MCF 10A (cell line): ENCODE measurements at regions of chr3 and their contacts with region 1.

Region 1: DNA sequence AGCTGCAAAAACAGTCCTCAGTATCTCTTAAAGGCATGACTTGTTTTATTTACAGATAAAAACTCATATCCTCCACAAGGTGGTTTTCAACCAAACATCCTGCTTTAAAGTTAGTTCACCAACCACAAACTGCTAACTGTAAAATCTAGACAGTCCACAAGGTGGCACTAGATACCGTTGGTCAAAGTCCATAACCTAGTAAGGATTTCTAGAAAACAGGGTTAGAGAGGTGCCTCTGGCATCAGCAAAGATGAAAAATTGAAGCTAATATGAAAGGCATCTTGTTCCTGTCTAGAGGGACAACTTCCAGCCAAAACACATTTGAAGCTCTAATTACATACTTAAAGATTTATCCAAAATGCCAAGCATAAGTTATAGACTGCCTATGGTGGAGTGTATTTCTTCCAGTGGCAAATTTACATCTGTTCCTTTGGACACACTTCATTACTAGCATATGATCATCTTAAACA is 56.0 kb downstream of the ZMAT3 start:
- DNase-seq: peak; percentile 82
- H3K4me3 Mint-ChIP-seq: no peak overlapping the region
- H3K27ac Mint-ChIP-seq: peak overlapping the region; percentile 54
- H3K4me1 Mint-ChIP-seq: no peaks in the 10 kb centered on the region
- H3K27me3 Mint-ChIP-seq: no peaks in the 10 kb centered on the region
- CTCF ChIP-seq: peak; percentile 81

Region 2: DNA sequence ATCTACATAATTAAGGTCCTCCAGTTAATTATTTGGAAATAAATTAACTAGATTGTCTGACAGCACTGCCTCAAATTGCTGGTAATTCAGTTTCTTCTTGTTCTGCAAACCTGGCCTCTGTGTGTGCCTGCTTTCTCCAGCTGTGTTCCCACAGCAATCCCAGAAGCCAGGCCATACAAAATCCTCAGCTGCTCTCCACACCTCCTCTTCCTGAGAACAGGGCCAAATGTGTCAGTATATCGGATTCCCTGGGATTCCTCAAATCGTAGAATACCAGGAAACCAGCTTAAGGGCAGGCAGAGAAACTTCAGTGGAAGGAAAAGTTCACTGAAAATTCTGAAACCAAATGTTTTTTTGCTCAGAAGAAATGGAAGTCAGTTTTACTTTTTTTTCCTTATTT is 205.4 kb before region 1 on chr3:
- CTCF ChIA-PET with region 1: no interaction called
- POLR2A ChIA-PET with region 1: no interaction called
- intact Hi-C with region 1: no loop called
- DNase-seq: no peak
- H3K4me3 Mint-ChIP-seq: no peak overlapping the region
- H3K27ac Mint-ChIP-seq: no peak overlapping the region
- H3K4me1 Mint-ChIP-seq: no peaks in the 10 kb centered on the region
- H3K27me3 Mint-ChIP-seq: no peaks in the 10 kb centered on the region
- CTCF ChIP-seq: no peak

Region 3: GRCh38 chr3:178947738-178948137 is 67.8 kb before region 1 on chr3:
- CTCF ChIA-PET with region 1: no interaction called
- POLR2A ChIA-PET with region 1: no interaction called
- intact Hi-C with region 1: no loop called
- DNase-seq: no peak
- H3K4me3 Mint-ChIP-seq: no peak overlapping the region
- H3K27ac Mint-ChIP-seq: no peak overlapping the region
- H3K4me1 Mint-ChIP-seq: peaks cover 6% of the 10 kb centered on the region
- H3K27me3 Mint-ChIP-seq: no peaks in the 10 kb centered on the region
- CTCF ChIP-seq: peak; percentile 7

Region 4: DNA sequence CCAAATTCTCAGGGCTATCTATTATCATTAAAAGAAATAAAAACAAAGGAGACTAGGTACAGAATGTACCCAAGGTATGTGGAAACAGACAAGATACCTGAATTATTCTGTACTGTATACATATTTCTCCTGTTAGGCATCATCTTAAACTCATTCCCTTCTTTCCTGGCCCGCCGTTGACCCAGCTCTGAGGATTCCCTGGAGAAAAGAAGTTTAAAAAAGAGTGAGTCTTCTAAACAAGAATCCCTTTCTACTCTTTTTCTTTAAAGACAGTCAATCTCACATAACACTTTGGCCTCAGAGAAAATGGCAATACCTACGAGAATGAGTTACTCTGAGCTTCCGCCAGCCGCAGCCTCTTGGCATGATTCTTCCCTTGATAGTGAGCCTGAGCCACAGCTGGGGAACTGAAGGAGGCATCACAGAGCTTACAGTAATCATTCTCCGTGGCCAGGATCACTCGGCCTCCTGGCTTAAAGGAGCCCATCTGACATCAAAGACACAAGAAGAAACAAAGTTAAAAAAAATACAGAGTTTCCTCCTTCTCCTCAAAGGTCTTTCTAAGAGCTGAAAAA is 11.8 kb after region 1 on chr3:
- CTCF ChIA-PET with region 1: interaction called, 39 read pairs
- POLR2A ChIA-PET with region 1: interaction called, 11 read pairs
- intact Hi-C with region 1: no loop called
- DNase-seq: peak; percentile 71
- H3K4me3 Mint-ChIP-seq: peak overlapping the region; percentile 48
- H3K27ac Mint-ChIP-seq: peak overlapping the region; percentile 89
- H3K4me1 Mint-ChIP-seq: peaks cover 16% of the 10 kb centered on the region
- H3K27me3 Mint-ChIP-seq: no peaks in the 10 kb centered on the region
- CTCF ChIP-seq: no peak

Region 5: GRCh38 chr3:179046497-179047353 is 31.1 kb after region 1 on chr3:
- CTCF ChIA-PET with region 1: interaction called, 13 read pairs
- POLR2A ChIA-PET with region 1: no interaction called
- intact Hi-C with region 1: no loop called
- DNase-seq: no peak
- H3K4me3 Mint-ChIP-seq: no peak overlapping the region
- H3K27ac Mint-ChIP-seq: no peak overlapping the region
- H3K4me1 Mint-ChIP-seq: peaks cover 27% of the 10 kb centered on the region
- H3K27me3 Mint-ChIP-seq: no peaks in the 10 kb centered on the region
- CTCF ChIP-seq: no peak

Region 6: DNA sequence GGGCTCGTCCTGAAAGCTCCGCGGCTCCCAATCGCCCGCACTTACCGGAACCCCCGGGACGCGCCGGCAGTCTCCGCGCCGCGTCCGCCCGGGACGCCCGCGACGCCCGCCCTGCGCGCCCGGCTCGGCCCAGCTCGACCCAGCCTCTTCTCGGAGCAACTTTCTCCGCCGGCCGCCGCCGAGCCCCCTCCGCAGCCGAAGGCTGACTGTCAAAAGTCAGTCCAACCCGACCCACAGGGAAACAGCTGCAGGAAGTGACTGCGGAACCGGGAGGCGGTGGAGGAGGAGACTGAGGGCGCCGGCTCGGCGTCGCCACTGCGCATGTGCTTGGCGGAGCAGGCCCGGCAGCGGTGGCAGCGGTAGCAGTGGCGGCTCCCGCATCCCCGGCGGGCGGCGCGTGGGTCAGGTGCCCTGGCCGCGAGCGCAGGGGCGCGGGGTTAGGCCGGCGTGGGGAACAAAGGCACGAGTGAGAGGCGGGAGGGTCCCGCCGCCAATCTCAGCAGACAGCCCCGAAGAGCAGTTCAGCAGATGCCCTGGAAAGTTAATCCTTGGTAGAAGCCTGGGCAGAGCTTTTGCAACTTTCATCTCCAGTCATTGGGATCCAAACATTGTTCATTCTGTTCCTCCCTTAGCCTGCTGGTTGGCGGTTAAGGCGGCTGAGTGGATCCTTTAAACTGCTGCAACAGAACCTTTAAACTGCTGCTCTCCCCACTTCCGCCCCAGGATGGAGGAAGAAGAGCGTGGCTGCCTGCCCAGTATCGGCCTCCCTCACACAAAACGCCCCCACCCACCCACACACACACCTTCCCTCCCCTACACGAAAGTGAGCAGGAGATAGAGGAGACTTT is 56.2 kb after region 1 on chr3 and contains the start of gene ZMAT3:
- CTCF ChIA-PET with region 1: interaction called, 19 read pairs
- POLR2A ChIA-PET with region 1: interaction called, 14 read pairs
- intact Hi-C with region 1: loop called (anchors 1 kb)
- DNase-seq: peak; percentile 79
- H3K4me3 Mint-ChIP-seq: peak within 1 kb of the TSS; percentile 93
- H3K27ac Mint-ChIP-seq: peak within 1 kb of the TSS; percentile 90
- H3K4me1 Mint-ChIP-seq: peaks cover 20% of the 10 kb centered on the region
- H3K27me3 Mint-ChIP-seq: no peaks in the 10 kb centered on the region
- CTCF ChIP-seq: no peak
- total RNA-seq, gene ZMAT3: 50.9 and 58.0 TPM in 2 replicates

Region 7: GRCh38 chr3:179098388-179099077 is 82.9 kb after region 1 on chr3:
- CTCF ChIA-PET with region 1: interaction called, 17 read pairs
- POLR2A ChIA-PET with region 1: interaction called, 9 read pairs
- intact Hi-C with region 1: no loop called
- DNase-seq: peak; percentile 74
- H3K4me3 Mint-ChIP-seq: peak overlapping the region; percentile 48
- H3K27ac Mint-ChIP-seq: peak overlapping the region; percentile 35
- H3K4me1 Mint-ChIP-seq: peaks cover 7% of the 10 kb centered on the region
- H3K27me3 Mint-ChIP-seq: no peaks in the 10 kb centered on the region
- CTCF ChIP-seq: peak; percentile 22

Region 8: GRCh38 chr3:179322286-179323196 is 307.0 kb after region 1 on chr3 and contains the start of gene ZNF639:
- CTCF ChIA-PET with region 1: interaction called, 11 read pairs
- POLR2A ChIA-PET with region 1: interaction called, 7 read pairs
- intact Hi-C with region 1: no loop called
- DNase-seq: peak; percentile 72
- H3K4me3 Mint-ChIP-seq: peak within 1 kb of the TSS; percentile 81
- H3K27ac Mint-ChIP-seq: peak within 1 kb of the TSS; percentile 90
- H3K4me1 Mint-ChIP-seq: peaks cover 20% of the 10 kb centered on the region
- H3K27me3 Mint-ChIP-seq: no peaks in the 10 kb centered on the region
- CTCF ChIP-seq: peak; percentile 68
- total RNA-seq, gene ZNF639: 35.5 and 52.8 TPM in 2 replicates